ENCODE measurements at regions of chr16 and their contacts with region 1.

Region 1: DNA sequence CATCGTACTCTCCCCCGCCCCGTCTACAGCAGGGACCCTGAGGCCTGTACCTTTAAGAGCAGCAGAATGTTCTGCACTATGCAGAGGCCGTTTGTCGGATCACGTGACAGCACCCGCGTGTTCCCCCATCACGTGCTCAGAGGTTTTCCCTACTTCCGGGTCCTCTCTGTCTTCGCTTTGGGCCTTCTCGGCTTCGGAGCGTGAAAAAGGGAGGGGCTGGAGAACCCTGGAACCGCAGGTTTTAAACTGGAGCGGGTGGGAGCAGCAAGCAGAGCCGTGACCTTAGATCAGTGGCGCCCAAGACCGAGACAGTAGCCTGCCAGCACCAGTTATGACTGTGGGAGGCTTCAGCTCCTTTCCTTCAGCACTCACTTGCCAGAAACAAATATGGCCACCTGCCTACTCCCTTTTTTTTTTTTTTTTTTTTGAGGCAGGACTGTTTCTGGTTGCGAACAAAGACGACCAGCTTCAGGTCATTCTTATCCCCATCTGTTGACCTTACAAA is at the start of gene CLN3:
- DNase-seq: peak; percentile 77 to 88
- H3K4me3 ChIP-seq: peak within 1 kb of the TSS; percentile 83 to 96 (median 92)
- H3K27ac ChIP-seq: peak within 1 kb of the TSS; percentile 98
- H3K4me1 ChIP-seq: no peaks in the 10 kb centered on the region
- H3K27me3 ChIP-seq: peaks cover 0 to 2% (median 0%) of the 10 kb centered on the region in 4 experiments; a peak in 1 of 7 replicates
- CTCF ChIP-seq: no peak
- EP300 ChIP-seq: no peak
- POLR2A ChIP-seq: no peak; a peak in 1 of 3 replicates
- RAD21 ChIP-seq: no peak
- total RNA-seq, gene CLN3: 22.9 and 24.3 TPM in 2 replicates

Region 2: DNA sequence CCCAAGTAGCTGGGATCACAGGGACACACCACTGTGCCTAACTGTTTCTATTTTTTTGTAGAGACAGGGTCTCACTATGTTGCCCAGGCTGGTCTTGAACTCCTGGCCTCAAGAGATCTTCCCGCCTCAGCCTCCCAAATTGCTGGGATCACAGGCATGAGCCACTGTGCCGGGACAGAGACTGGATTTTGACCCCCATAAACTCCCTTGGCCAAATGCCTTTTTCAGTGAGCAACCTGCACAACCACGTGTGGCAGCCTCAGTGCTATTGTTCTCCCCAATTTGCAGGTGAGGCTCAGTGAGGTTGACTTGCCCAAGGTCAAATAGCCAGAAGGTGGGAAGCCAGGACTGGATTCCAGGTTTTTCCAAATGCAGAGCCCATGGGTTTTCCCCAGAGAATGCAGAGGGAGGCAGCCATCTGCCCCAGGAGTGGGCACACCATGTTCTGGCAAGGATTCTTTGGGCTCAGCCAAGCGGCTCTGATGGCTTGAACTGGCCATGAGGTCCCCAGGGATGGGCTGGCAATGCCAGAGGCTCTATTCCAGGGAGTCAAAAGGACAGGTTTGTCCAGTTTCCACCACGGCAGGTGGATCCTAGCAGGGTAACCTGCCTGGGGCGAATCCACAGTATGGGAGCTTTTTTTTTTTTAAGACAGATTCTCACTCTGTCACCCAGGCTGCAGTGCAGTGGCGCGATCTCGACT is 12.8 kb after region 1 on chr16:
- CTCF ChIA-PET with region 1: interaction called, 4 read pairs
- POLR2A ChIA-PET with region 1: interaction called, 10 read pairs
- DNase-seq: no peak
- H3K4me3 ChIP-seq: no peak overlapping the region
- H3K27ac ChIP-seq: no peak overlapping the region
- H3K4me1 ChIP-seq: no peaks in the 10 kb centered on the region
- H3K27me3 ChIP-seq: peaks cover 0 to 2% (median 0%) of the 10 kb centered on the region in 4 experiments; a peak in 1 of 7 replicates
- CTCF ChIP-seq: no peak
- EP300 ChIP-seq: no peak
- POLR2A ChIP-seq: no peak
- RAD21 ChIP-seq: no peak

Region 3: GRCh38 chr16:28617874-28618273 is 125.9 kb after region 1 on chr16:
- CTCF ChIA-PET with region 1: no interaction called
- POLR2A ChIA-PET with region 1: no interaction called
- DNase-seq: no peak
- H3K4me3 ChIP-seq: no peak overlapping the region
- H3K27ac ChIP-seq: no peak overlapping the region
- H3K4me1 ChIP-seq: peaks cover 2 to 5% (median 3%) of the 10 kb centered on the region in 4 experiments; a peak in 4 of 7 replicates
- H3K27me3 ChIP-seq: no peaks in the 10 kb centered on the region
- CTCF ChIP-seq: no peak
- EP300 ChIP-seq: no peak
- POLR2A ChIP-seq: no peak
- RAD21 ChIP-seq: no peak